ENCODE measurements at regions of chr3 and their contacts with region 1.

Region 1: GRCh38 chr3:69161587-69162307 is 39.4 kb upstream of the LMOD3 start:
- DNase-seq: no peak
- H3K4me3 ChIP-seq: no peak overlapping the region
- H3K27ac ChIP-seq: no peak overlapping the region
- H3K4me1 ChIP-seq: no peaks in the 10 kb centered on the region
- H3K27me3 ChIP-seq: no peaks in the 10 kb centered on the region
- CTCF ChIP-seq: peak; percentile 87 to 90

Region 2: GRCh38 chr3:69306239-69307185 is 144.8 kb after region 1 on chr3:
- intact Hi-C with region 1: loop called (anchors 10 kb)
- DNase-seq: peak; percentile 65 to 83
- H3K4me3 ChIP-seq: no peak overlapping the region
- H3K27ac ChIP-seq: peak overlapping the region; percentile 54 to 59
- H3K4me1 ChIP-seq: peaks cover 0 to 11% (median 7%) of the 10 kb centered on the region in 4 donors
- H3K27me3 ChIP-seq: no peaks in the 10 kb centered on the region
- CTCF ChIP-seq: peak; percentile 82 to 93

Region 3: DNA sequence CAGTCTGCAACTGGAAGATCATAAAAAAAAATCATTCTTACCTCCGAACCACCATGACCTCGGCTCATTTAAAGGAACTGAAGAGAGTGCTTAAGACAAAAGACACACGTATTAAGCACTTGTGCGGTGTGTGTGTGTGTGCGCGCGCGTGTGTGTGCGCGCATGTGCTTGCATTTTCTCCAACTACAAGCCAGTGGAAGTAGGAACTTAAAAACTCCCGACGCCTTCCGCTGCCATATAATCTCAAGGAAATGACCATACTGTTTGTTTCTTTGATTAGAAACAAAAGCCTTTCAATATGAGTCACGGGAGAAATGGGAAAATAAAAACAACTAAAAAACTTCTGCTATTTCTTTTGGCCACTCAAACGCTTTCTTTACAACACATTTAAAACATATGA is 191.8 kb after region 1 on chr3:
- intact Hi-C with region 1: no loop called
- DNase-seq: peak in 1 of 2 donors; percentile 37
- H3K4me3 ChIP-seq: peak overlapping the region; percentile 5 to 34
- H3K27ac ChIP-seq: peak overlapping the region in 1 of 2 donors; percentile 23
- H3K4me1 ChIP-seq: no peaks in the 10 kb centered on the region
- H3K27me3 ChIP-seq: no peaks in the 10 kb centered on the region
- CTCF ChIP-seq: no peak

Region 4: GRCh38 chr3:69410250-69410649 is 248.5 kb after region 1 on chr3:
- intact Hi-C with region 1: loop called (anchors 10 kb)
- DNase-seq: peak; percentile 75 to 78
- H3K4me3 ChIP-seq: no peak overlapping the region
- H3K27ac ChIP-seq: no peak overlapping the region
- H3K4me1 ChIP-seq: no peaks in the 10 kb centered on the region
- H3K27me3 ChIP-seq: no peaks in the 10 kb centered on the region
- CTCF ChIP-seq: peak; percentile 77 to 79